Activated CD8-positive, alpha-beta T cell treated with anti-CD3 and anti-CD28 coated beads for 36 hours (primary cell): ENCODE measurements at regions of chr18 and their contacts with region 1.

Region 1: DNA sequence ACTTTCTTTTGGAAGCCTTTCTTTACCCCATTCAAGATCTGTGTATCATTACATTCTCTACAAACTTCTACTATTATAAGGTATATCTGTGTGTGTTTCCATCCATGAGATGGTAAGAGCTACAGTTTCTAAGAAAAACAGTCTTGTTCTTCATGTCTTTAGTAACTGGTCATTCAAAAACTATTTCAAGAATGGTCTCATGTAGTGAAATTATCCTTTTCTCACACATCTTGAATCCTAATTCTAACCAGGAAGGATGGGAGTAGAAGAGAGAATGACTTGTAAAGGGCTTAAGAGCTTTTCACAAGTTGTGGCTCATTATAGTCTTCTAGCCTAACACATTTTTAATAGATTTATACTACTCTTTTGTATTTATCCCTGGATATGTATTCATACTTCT is 47.3 kb downstream of the ROCK1 start:
- DNase-seq: no peak
- ATAC-seq: no peak
- H3K4me3 Mint-ChIP-seq: no peak overlapping the region
- H3K27ac Mint-ChIP-seq: peak overlapping the region; percentile 0
- H3K4me1 Mint-ChIP-seq: peaks cover 21% of the 10 kb centered on the region
- H3K27me3 Mint-ChIP-seq: no peaks in the 10 kb centered on the region
- CTCF ChIP-seq: no peak

Region 2: DNA sequence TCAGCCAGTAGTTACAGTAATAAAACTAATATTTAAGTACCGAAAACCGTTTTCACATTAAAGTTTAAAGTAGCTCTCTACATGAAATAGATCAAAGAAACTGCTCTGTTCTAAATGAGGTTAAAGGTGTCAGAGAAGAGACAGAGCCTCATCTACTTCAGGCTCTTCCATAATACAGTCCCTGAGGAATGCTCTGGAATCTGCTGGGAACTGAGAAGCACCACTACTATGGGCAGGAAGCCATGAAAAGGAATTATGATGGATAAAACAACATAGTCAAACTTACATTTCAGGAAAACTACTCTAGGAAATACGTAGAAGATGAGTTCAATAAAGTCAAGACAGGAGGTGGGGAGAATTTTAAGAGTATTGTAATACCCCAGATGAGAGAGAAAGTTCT is 12.7 kb before region 1 on chr18:
- CTCF ChIA-PET with region 1: interaction called, 4 read pairs
- POLR2A ChIA-PET with region 1: interaction called, 6 read pairs
- intact Hi-C with region 1: loop called (anchors 1 kb)
- DNase-seq: no peak
- ATAC-seq: no peak
- H3K4me3 Mint-ChIP-seq: no peak overlapping the region
- H3K27ac Mint-ChIP-seq: no peak overlapping the region
- H3K4me1 Mint-ChIP-seq: peaks cover 29% of the 10 kb centered on the region
- H3K27me3 Mint-ChIP-seq: no peaks in the 10 kb centered on the region
- CTCF ChIP-seq: no peak

Region 3: GRCh38 chr18:21123290-21123926 is 59.1 kb after region 1 on chr18:
- CTCF ChIA-PET with region 1: no interaction called
- POLR2A ChIA-PET with region 1: no interaction called
- intact Hi-C with region 1: no loop called
- DNase-seq: no peak
- ATAC-seq: no peak
- H3K4me3 Mint-ChIP-seq: no peak overlapping the region
- H3K27ac Mint-ChIP-seq: no peak overlapping the region
- H3K4me1 Mint-ChIP-seq: peaks cover 4% of the 10 kb centered on the region
- H3K27me3 Mint-ChIP-seq: no peaks in the 10 kb centered on the region
- CTCF ChIP-seq: no peak

Region 4: GRCh38 chr18:21205695-21206094 is 141.3 kb after region 1 on chr18:
- CTCF ChIA-PET with region 1: no interaction called
- POLR2A ChIA-PET with region 1: no interaction called
- intact Hi-C with region 1: no loop called
- DNase-seq: no peak
- ATAC-seq: no peak
- H3K4me3 Mint-ChIP-seq: no peak overlapping the region
- H3K27ac Mint-ChIP-seq: no peak overlapping the region
- H3K4me1 Mint-ChIP-seq: no peaks in the 10 kb centered on the region
- H3K27me3 Mint-ChIP-seq: peaks cover 3% of the 10 kb centered on the region
- CTCF ChIP-seq: no peak

Region 5: GRCh38 chr18:21315741-21316187 is 251.4 kb after region 1 on chr18:
- CTCF ChIA-PET with region 1: no interaction called
- POLR2A ChIA-PET with region 1: no interaction called
- intact Hi-C with region 1: no loop called
- DNase-seq: no peak
- ATAC-seq: no peak
- H3K4me3 Mint-ChIP-seq: no peak overlapping the region
- H3K27ac Mint-ChIP-seq: no peak overlapping the region
- H3K4me1 Mint-ChIP-seq: no peaks in the 10 kb centered on the region
- H3K27me3 Mint-ChIP-seq: peaks cover 2% of the 10 kb centered on the region
- CTCF ChIP-seq: no peak